GM10248 (cell line): ENCODE measurements at regions of chr11 and their contacts with region 1.

Region 1: GRCh38 chr11:3091791-3092602 is 34.8 kb upstream of the CARS1 start:
- DNase-seq: peak; percentile 93
- CTCF ChIP-seq: peak; percentile 95

Region 2: GRCh38 chr11:3021125-3021524 is 70.9 kb before region 1 on chr11:
- CTCF ChIA-PET with region 1: interaction called, 13 read pairs
- POLR2A ChIA-PET with region 1: no interaction called
- DNase-seq: peak; percentile 61
- CTCF ChIP-seq: peak; percentile 9

Region 3: GRCh38 chr11:3043315-3043871 is 48.6 kb before region 1 on chr11:
- CTCF ChIA-PET with region 1: interaction called, 115 read pairs
- POLR2A ChIA-PET with region 1: no interaction called
- DNase-seq: no peak
- CTCF ChIP-seq: no peak

Region 4: DNA sequence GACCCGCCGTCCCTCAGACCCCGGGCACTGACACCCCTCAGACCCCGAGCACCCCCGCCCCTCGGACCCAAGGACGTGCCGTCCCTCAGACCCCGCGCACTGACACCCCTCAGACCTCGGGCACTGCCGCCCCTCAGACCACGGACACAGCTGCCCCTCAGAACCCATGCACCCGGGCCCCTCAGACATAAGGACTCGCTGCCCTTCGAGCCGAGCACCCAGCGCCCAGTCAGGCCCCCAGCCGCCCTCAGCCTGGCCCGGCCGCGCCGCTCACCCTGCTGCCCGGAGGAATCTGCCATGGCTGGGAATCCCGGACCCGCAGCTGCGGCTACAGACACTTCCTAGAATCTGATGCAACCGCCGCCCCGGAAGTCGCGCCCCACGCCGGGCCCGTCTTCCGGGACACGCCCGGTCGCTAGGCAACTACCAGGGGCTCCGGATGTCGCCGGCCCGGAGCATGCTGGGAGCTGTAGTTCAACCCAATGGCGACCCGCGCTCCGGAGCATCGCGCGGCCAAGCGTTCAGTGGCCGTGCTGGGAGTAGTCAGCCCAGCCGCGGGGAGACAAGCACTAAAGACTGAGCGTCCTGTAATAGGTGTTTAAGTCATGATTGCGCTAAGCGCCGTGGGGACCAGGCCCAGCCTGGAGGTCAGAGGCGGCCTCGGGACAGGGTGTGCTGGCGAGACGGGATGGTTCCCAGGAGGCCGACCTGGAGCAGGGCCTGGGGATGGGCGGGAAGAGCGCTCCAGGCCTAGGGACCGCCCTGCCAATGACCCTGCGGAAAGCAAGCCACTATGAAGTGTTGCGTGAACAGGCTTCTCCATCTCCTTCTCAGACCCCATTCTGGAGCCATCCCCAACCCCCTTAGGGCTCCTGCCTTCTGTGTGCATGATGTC is 34.7 kb before region 1 on chr11 and contains the start of gene CARS1:
- CTCF ChIA-PET with region 1: interaction called, 54 read pairs
- POLR2A ChIA-PET with region 1: no interaction called
- DNase-seq: peak; percentile 96
- CTCF ChIP-seq: no peak

Region 5: DNA sequence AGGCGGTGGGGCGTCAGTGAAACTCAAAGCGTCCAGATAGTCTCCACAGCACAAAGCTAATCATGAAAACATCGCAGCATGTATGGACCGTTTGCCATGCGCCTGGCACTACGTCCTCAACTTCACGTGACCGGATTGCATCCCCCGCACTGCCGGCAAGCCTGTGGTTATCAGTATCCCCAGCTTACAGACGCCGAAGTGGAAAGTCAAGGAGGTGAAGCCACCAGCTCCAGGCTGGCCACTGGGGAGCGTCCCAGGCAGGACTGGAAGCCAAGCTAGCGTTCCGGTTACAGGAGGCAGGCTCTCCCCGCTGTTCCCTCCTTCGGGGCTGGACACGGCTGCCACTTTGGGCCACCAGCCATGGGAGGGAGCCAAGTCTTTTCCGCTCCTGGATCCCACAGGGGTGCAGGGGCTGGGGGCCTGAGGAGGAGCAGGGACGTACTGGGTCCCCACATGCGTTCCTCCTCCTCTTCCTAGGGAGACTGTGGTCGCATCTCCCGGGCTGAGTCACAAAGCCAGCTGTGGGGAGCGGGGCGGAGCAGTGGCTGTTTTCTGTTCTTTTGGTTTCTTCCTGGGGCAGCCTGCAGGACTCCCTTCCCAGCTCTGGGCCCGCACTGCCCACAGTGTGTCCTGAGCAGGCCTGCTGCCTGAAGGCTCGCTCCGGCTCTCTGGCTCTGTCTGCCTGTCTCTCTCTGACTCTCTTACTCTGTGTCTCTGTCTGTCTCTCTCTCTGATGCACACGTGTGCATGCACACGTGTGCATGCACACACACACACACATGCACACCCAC is 77.5 kb after region 1 on chr11:
- CTCF ChIA-PET with region 1: no interaction called
- POLR2A ChIA-PET with region 1: no interaction called
- DNase-seq: no peak
- CTCF ChIP-seq: no peak

Region 6: DNA sequence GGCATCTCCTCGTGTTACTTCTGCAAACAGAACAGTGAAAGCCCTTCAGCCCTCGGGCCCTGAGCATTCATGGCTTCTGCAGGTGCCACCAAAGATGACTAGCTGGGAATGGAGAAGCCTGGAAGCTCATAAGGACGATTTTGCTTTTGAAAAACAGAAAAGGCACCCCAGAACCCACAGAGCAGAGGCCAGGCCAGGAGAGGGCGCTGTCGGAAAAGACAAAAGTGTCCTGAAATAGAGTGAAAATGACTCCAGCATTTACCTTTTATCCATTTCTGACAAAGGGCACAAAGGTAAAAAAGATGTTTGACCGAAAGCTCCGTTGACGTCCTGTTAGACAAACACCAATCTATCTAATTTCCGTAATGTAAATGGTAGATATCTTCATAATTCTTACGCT is 249.3 kb after region 1 on chr11:
- CTCF ChIA-PET with region 1: no interaction called
- POLR2A ChIA-PET with region 1: no interaction called
- DNase-seq: peak; percentile 55
- CTCF ChIP-seq: peak; percentile 77

Region 7: GRCh38 chr11:3434976-3435375 is 343.0 kb after region 1 on chr11:
- CTCF ChIA-PET with region 1: no interaction called
- POLR2A ChIA-PET with region 1: no interaction called
- DNase-seq: no peak
- CTCF ChIP-seq: no peak